A549 (cell line): ENCODE measurements at regions of chr20 and their contacts with region 1.

Region 1: GRCh38 chr20:58112017-58112781 is 116.3 kb downstream of the ANKRD60 start:
- DNase-seq: peak; percentile 53 to 58
- ATAC-seq: peak; percentile 88
- H3K4me3 ChIP-seq: no peak overlapping the region
- H3K27ac ChIP-seq: peak overlapping the region; percentile 70 to 83
- H3K4me1 ChIP-seq: peaks cover 35% of the 10 kb centered on the region
- CTCF ChIP-seq: no peak
- EP300 ChIP-seq: peak in 1 of 2 experiments; percentile 46; a peak in 1 of 5 replicates
- POLR2A ChIP-seq: no peak
- RAD21 ChIP-seq: no peak

Region 2: GRCh38 chr20:58078741-58079522 is 33.3 kb before region 1 on chr20:
- CTCF ChIA-PET with region 1: no interaction called
- POLR2A ChIA-PET with region 1: no interaction called
- DNase-seq: no peak
- ATAC-seq: no peak
- H3K4me3 ChIP-seq: no peak overlapping the region
- H3K27ac ChIP-seq: peak overlapping the region in 1 of 2 experiments; percentile 60; a peak in 3 of 6 replicates
- H3K4me1 ChIP-seq: peaks cover 17% of the 10 kb centered on the region
- CTCF ChIP-seq: no peak
- EP300 ChIP-seq: no peak
- POLR2A ChIP-seq: no peak
- RAD21 ChIP-seq: no peak

Region 3: DNA sequence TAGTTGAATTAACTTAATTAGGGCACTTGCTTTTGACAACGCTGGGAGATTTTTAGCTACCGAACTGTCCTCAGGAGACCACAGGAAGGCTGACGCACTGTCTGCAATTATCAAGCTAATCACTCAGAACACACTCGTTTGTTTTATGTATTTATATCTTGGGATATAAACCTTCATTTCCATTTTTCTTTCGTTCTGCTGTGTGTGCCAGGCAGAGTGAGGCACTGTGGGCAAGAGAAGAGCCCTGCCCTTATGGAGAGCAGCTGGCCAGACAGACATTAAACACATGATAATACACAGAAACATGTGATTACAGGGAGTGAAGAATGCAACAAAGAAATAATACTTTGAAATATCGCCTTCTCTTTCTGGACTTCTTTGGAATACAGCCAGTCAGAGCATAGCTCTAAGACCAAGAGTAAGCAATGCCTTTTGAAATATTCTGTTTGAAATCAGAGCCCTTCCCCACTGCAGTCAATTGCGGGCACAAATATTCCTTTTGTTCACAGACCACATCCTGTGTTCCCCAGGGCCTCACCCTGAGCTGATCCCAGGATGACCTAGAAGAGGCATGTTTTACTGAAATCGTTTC is 19.4 kb after region 1 on chr20:
- CTCF ChIA-PET with region 1: interaction called, 7 read pairs
- POLR2A ChIA-PET with region 1: interaction called, 14 read pairs
- DNase-seq: peak in 1 of 2 experiments; percentile 42
- ATAC-seq: peak in 1 of 2 experiments; percentile 59; a peak in 3 of 6 replicates
- H3K4me3 ChIP-seq: no peak overlapping the region
- H3K27ac ChIP-seq: peak overlapping the region; percentile 41 to 68; a peak in 4 of 6 replicates
- H3K4me1 ChIP-seq: peaks cover 30% of the 10 kb centered on the region
- CTCF ChIP-seq: no peak
- EP300 ChIP-seq: peak in 1 of 2 experiments; percentile 36; a peak in 1 of 5 replicates
- POLR2A ChIP-seq: no peak
- RAD21 ChIP-seq: no peak